ENCODE measurements at regions of chr10 and their contacts with region 1.

Region 1: DNA sequence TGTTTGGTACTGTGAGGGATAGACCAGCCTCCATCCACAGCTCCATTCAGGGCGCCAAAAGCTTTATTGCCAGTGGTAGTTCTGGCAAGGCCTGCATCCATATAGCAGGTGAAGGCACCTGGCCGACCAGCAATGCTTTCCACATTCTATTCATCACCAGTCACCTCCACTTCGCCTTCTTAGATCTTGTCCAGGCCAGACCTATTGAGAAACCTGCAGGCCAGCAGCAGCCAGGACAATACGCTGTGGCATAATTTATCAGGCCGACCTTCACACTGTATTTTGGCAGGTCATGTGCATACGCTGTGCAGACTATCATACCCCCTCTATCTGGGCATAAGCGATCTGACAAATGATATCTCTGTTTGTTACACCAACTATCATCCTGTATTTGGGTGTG is 15.2 kb upstream of the KNDC1 start:
- DNase-seq: no peak
- H3K4me3 Mint-ChIP-seq: no peak overlapping the region
- H3K27ac Mint-ChIP-seq: no peak overlapping the region
- H3K4me1 Mint-ChIP-seq: peaks cover 8% of the 10 kb centered on the region
- H3K27me3 Mint-ChIP-seq: peaks cover 17% of the 10 kb centered on the region

Region 2: DNA sequence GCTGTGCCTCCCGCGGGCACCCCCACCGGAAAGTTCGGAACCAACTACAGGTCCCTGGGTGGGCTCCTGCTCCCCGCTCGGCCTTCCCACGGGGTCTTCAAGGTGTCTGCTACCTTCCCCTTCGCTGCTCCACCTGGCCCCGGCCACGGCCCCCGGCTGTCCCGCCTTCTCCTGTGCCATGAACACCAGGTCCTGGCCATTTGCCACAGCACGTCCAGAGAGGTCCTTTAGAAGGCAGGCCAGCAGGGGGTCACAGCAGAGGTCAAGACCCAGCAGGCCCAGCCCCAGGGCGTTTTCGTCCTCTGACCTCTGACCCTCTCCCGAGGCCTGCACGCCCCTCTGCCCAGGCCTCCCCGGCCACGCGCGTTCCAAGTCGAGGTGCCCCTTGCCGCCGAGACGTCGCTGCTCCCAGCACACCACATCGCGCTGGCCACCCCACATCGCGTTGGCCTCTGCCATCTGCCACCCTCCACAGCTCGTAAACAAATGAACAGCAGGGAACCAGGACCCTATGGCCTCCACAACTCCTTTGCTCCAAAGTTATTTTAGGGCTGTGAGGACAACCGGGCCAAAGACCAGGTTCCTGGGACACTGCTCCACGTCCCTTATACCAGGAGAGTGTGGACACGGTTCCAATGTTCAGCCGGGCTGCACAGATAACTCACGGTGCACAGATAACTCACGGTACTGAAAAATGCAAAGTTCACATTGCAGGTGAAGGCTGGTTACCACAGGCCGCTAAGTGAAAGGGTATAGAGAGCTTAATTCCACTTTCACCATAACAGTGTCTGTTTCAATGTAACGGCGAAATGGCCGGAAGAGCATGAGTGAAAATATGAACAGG is 276.7 kb before region 1 on chr10:
- intact Hi-C with region 1: no loop called
- DNase-seq: no peak
- H3K4me3 Mint-ChIP-seq: no peak overlapping the region
- H3K27ac Mint-ChIP-seq: no peak overlapping the region
- H3K4me1 Mint-ChIP-seq: no peaks in the 10 kb centered on the region
- H3K27me3 Mint-ChIP-seq: no peaks in the 10 kb centered on the region

Region 3: GRCh38 chr10:133278577-133279265 is 133.9 kb after region 1 on chr10:
- intact Hi-C with region 1: loop called (anchors 1 kb)
- DNase-seq: peak; percentile 63
- H3K4me3 Mint-ChIP-seq: peak overlapping the region; percentile 87
- H3K27ac Mint-ChIP-seq: peak overlapping the region; percentile 86
- H3K4me1 Mint-ChIP-seq: peaks cover 14% of the 10 kb centered on the region
- H3K27me3 Mint-ChIP-seq: no peaks in the 10 kb centered on the region

Region 4: GRCh38 chr10:133318494-133319127 is 173.8 kb after region 1 on chr10:
- intact Hi-C with region 1: loop called (anchors 2 kb)
- DNase-seq: peak; percentile 60
- H3K4me3 Mint-ChIP-seq: peak overlapping the region; percentile 64
- H3K27ac Mint-ChIP-seq: no peak overlapping the region
- H3K4me1 Mint-ChIP-seq: peaks cover 7% of the 10 kb centered on the region
- H3K27me3 Mint-ChIP-seq: peaks cover 4% of the 10 kb centered on the region

Measured in activated T-helper 1 cell treated with anti-CD3 and anti-CD28 coated beads, Interleukin-12 subunit alpha, Interleukin-12 subunit beta, Interleukin-2, Interleukin-4 antibody, amounts not matched to agents 30 ng/mL and 10 ng/mL and 1 ng/mL, durations not matched to agents 14 hours and 24 hours and 36 hours (primary cell).